Left ventricle myocardium superior (tissue), 1 donor: ENCODE measurements at regions of chr6 and their contacts with region 1.

Region 1: DNA sequence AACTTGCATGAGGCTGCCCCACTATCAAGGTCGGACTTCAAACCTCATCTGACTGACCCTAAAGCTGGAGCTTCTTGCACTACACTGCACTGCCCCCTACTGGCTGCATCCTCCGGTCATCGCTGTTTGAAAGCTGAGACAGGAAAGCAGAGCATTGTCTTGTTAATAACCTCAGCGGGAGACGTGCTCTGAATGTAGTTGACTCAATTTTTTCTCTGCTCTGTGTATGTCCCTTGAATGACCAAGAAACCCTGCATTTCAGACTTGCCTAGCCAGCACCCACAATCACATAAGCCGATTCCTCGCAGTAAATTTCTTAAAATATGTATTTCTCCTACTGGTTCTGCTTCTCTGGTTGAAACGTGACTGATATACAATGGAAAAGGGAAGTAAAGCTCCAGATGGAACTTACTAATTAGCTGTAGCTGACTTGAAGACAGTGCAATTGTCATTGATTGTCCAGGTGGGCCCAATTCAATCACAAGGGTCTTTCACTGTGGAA is 27.8 kb downstream of the TCF21 start:
- DNase-seq: peak; percentile 93
- ATAC-seq: peak; percentile 93

Region 2: GRCh38 chr6:133568970-133569889 is 347.5 kb before region 1 on chr6:
- intact Hi-C with region 1: loop called (anchors 5 kb)
- DNase-seq: peak; percentile 31
- ATAC-seq: peak; percentile 88